Activated CD4-positive, alpha-beta memory T cell treated with anti-CD3 and anti-CD28 coated beads for 36 hours (primary cell): ENCODE measurements at regions of chr4 and their contacts with region 1.

Region 1: DNA sequence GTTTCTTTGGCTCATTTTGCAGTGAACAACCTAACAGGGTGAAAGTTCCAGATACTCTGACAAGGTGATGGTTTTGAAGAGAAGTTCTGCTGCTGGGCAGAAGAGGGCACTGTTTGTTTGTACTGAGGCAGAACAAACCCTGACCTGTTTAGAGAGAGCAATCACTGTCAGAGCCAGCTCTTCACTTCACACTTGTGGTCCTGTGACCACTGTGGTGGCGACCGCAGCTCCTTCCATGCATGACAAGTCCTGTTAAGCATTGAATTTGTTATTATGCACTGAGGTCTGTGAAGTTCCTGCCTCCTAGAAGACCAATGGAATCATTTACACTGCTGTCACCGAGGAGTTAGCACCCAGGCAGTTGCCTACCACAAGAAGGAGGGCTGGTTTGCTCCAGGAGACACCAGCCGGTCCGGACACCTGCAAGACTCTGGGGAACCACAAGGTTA is 86.6 kb downstream of the ZNF330 start:
- DNase-seq: peak; percentile 84
- H3K4me3 Mint-ChIP-seq: no peak overlapping the region
- H3K27ac Mint-ChIP-seq: no peak overlapping the region
- H3K4me1 Mint-ChIP-seq: peaks cover 3% of the 10 kb centered on the region
- H3K27me3 Mint-ChIP-seq: peaks cover 3% of the 10 kb centered on the region

Region 2: DNA sequence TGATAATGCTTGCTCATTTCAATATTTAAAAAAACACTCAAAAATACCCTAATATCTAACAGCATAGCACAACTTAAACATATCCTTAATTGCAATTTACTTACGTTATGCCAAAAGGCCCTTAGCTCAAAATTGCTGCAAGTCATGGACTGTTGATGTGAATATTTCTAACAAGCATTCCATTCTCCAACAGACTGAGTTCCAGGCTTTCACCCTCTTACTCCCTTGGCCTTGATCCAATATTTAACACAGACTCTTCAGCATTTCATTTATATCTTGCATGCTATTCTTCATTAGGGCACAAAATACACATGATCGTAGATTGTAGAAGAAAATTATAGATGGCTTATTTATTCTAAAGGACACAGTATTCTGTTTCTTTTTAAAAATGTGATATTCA is 270.5 kb before region 1 on chr4:
- CTCF ChIA-PET with region 1: no interaction called
- POLR2A ChIA-PET with region 1: no interaction called
- intact Hi-C with region 1: no loop called
- DNase-seq: no peak
- H3K4me3 Mint-ChIP-seq: no peak overlapping the region
- H3K27ac Mint-ChIP-seq: no peak overlapping the region
- H3K4me1 Mint-ChIP-seq: no peaks in the 10 kb centered on the region
- H3K27me3 Mint-ChIP-seq: no peaks in the 10 kb centered on the region

Region 3: DNA sequence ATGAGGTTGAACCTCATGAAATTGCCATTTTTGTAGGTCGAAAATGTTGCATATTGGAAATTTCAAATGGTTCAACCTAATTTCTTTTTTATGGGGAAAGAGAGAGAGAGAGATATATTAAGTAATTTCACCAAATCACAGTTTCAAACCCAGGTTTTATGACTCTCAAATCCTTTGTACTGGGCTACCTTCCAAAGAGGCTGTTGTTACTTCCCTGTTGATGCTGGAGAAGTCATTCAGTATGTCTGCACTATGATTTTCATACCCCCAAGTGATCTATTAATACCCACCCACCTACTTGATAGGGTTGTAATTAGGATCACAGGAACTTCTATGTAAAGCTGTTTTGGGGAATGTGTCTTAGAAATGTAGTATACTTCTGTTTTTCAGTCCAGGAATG is 23.4 kb after region 1 on chr4:
- CTCF ChIA-PET with region 1: no interaction called
- POLR2A ChIA-PET with region 1: no interaction called
- intact Hi-C with region 1: no loop called
- DNase-seq: no peak
- H3K4me3 Mint-ChIP-seq: no peak overlapping the region
- H3K27ac Mint-ChIP-seq: no peak overlapping the region
- H3K4me1 Mint-ChIP-seq: peaks cover 4% of the 10 kb centered on the region
- H3K27me3 Mint-ChIP-seq: peaks cover 24% of the 10 kb centered on the region

Region 4: GRCh38 chr4:141636082-141636770 is 329.0 kb after region 1 on chr4 and contains the start of gene IL15:
- CTCF ChIA-PET with region 1: no interaction called
- POLR2A ChIA-PET with region 1: no interaction called
- intact Hi-C with region 1: loop called (anchors 10 kb)
- DNase-seq: peak; percentile 86
- H3K4me3 Mint-ChIP-seq: peak within 1 kb of the TSS; percentile 88
- H3K27ac Mint-ChIP-seq: peak within 1 kb of the TSS; percentile 64
- H3K4me1 Mint-ChIP-seq: peaks cover 27% of the 10 kb centered on the region
- H3K27me3 Mint-ChIP-seq: peaks cover 2% of the 10 kb centered on the region
- total RNA-seq, gene IL15: 1.4 to 2.2 TPM

Region 5: DNA sequence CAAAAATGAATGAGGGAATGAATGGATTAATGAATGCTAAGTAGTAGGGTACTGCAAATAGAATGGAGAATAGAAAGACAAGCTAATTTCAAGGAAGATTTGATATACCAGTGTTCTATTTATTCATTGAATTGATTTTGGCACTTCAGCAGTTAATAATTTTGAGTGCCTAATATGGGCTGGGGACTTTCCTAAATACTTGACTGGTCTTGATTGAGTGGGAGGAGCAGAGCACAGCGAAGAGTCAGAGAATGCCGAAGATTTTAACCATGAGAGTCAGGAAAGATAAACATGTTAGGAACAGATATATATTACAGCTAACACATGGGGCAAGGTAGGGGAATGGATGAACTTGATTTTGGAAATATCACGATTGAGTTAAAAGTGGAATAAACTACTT is 339.7 kb after region 1 on chr4:
- CTCF ChIA-PET with region 1: no interaction called
- POLR2A ChIA-PET with region 1: no interaction called
- intact Hi-C with region 1: no loop called
- DNase-seq: no peak
- H3K4me3 Mint-ChIP-seq: no peak overlapping the region
- H3K27ac Mint-ChIP-seq: no peak overlapping the region
- H3K4me1 Mint-ChIP-seq: peaks cover 9% of the 10 kb centered on the region
- H3K27me3 Mint-ChIP-seq: no peaks in the 10 kb centered on the region

Region 6: GRCh38 chr4:141702472-141703182 is 395.4 kb after region 1 on chr4:
- CTCF ChIA-PET with region 1: no interaction called
- POLR2A ChIA-PET with region 1: no interaction called
- intact Hi-C with region 1: loop called (anchors 10 kb)
- DNase-seq: peak; percentile 23
- H3K4me3 Mint-ChIP-seq: no peak overlapping the region
- H3K27ac Mint-ChIP-seq: no peak overlapping the region
- H3K4me1 Mint-ChIP-seq: peaks cover 14% of the 10 kb centered on the region
- H3K27me3 Mint-ChIP-seq: no peaks in the 10 kb centered on the region